Mammary epithelial cell (primary cell): ENCODE measurements at regions of chr13 and their contacts with region 1.

Region 1: GRCh38 chr13:40438999-40439797 is 227.2 kb downstream of the FOXO1 start:
- DNase-seq: peak; percentile 37
- H3K4me3 ChIP-seq: peak overlapping the region in 1 of 3 experiments; percentile 3
- H3K27ac ChIP-seq: no peak overlapping the region
- H3K4me1 ChIP-seq: peaks cover 8% of the 10 kb centered on the region
- H3K27me3 ChIP-seq: no peaks in the 10 kb centered on the region
- CTCF ChIP-seq: no peak

Region 2: DNA sequence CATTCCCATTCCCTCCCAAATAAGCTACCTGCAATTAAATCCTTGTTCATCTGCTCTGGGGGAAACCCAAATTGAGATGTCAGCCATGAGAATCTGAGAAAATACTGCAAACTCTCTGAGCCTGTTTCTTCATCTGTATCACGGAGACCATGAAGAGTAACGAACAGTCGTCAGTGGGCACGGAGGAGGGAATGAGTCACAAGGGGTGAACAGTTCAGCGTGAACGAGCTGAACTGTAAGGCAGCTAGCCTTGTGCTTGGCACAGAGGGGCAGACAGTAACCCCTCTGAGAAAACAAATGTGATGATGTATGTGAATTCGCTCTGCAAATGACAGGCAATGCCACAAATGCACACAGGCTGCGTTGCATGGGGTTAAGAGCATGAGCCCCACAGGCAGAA is 61.4 kb before region 1 on chr13:
- CTCF ChIA-PET with region 1: no interaction called
- dilution Hi-C with region 1: loop called (anchors 5 kb)
- in situ Hi-C with region 1: no loop called
- intact Hi-C with region 1: no loop called
- DNase-seq: no peak
- H3K4me3 ChIP-seq: no peak overlapping the region
- H3K27ac ChIP-seq: no peak overlapping the region
- H3K4me1 ChIP-seq: no peaks in the 10 kb centered on the region
- H3K27me3 ChIP-seq: no peaks in the 10 kb centered on the region
- CTCF ChIP-seq: no peak

Region 3: DNA sequence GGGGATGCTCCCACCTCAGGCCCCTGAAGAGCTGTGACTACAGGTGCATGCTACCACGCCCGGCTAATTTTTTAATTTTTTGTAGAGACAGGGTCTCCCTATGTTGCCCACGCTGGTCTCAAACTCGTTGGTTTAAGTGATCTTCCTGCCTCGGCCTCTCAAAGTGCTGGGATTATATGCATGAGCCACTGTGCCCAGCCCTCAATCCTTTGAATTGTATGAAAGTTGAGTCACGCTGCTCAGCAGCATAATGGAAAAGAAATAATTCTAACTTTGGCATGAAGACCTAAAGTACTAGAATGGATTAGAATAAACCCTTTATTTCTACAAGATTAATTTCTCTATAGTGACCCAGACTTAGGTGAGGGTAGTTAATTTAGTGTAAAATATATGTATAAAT is 289.4 kb after region 1 on chr13:
- CTCF ChIA-PET with region 1: no interaction called
- dilution Hi-C with region 1: no loop called
- in situ Hi-C with region 1: no loop called
- intact Hi-C with region 1: no loop called
- DNase-seq: no peak
- H3K4me3 ChIP-seq: no peak overlapping the region
- H3K27ac ChIP-seq: no peak overlapping the region
- H3K4me1 ChIP-seq: no peaks in the 10 kb centered on the region
- H3K27me3 ChIP-seq: no peaks in the 10 kb centered on the region
- CTCF ChIP-seq: no peak